Astrocyte of the cerebellum (primary cell): ENCODE measurements at regions of chr6 and their contacts with region 1.

Region 1: GRCh38 chr6:44010411-44011349 is 116.6 kb downstream of the MRPL14 start:
- DNase-seq: peak; percentile 75
- H3K4me3 ChIP-seq: no peak overlapping the region
- CTCF ChIP-seq: no peak

Region 2: DNA sequence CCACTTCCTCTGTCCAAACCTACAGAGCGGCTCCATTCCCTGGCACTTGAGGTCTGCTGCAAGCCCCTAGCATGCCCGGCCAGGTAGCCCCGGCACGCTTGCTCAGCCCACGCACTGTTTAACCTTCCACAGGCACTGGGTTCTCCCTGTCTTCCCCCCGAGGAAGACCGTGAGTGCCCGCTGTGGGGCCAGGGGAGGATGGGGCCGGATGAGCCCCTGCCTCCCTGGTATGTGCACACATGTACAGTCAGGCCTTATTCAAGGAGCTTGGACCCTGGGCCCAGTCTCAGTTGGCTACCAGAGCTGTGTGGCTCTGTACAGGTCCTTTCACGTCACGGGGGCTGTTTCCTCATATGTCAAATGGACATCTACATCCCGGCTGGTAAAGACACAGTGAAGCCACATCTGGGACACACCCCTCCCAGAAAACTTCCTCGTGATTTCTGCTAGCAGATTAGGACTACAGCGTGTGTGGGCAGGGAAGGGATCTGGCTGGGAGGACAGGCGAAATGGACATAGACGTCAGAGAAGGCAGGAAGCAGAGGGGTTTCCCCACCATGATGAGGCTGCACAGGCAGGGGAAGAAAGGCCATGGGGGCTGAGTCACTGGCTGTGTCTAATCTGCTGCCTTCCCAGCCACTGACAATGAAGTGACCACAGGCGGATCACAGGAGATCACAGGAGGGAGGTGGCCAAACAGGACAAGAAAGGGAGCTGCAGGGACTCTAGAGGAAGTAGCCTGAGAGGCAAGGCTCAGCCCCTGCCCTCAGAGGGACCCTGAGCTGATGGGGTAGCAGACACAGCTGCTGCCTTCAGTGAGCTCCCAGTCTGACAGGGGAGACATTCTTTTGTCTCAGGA is 53.6 kb after region 1 on chr6:
- in situ Hi-C with region 1: loop called (anchors 5 kb)
- DNase-seq: peak; percentile 82
- H3K4me3 ChIP-seq: no peak overlapping the region
- CTCF ChIP-seq: no peak